Activated CD4-positive, alpha-beta memory T cell treated with anti-CD3 and anti-CD28 coated beads for 36 hours (primary cell): ENCODE measurements at regions of chr20 and their contacts with region 1.

Region 1: DNA sequence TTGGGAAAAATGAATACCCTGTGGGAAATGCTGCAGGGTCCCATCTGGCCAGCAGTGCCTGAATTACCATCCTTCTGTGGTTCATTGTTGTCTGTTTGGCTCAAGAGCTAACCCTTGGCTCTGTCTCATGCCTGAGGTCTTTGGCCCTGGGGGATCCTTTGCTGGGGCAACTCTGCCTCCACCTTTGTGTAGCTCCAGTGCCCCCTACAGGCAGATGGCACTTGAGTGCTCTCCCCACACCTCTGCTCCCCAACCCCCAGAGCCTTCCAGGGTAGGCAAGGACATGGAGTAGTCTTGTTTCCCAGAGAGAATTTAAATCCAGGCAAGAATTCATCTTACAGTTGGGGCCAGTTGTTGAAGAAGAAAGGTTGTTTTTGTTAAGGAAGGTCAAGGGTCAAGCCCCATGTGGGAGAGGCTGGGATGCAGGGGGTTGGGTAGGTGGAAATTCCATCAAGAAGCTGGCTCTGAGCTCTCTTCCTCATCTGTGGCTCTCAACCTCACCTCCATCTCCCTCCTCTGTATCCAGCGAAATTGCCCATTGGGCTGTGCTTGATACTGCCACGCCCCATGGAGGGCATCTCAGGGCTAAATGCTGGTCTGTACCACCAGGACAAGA is 44.2 kb downstream of the ZNF831 start:
- DNase-seq: peak; percentile 86
- H3K4me3 Mint-ChIP-seq: no peak overlapping the region
- H3K27ac Mint-ChIP-seq: peak overlapping the region; percentile 64
- H3K4me1 Mint-ChIP-seq: peaks cover 22% of the 10 kb centered on the region
- H3K27me3 Mint-ChIP-seq: no peaks in the 10 kb centered on the region

Region 2: GRCh38 chr20:59055295-59055694 is 152.6 kb before region 1 on chr20:
- CTCF ChIA-PET with region 1: interaction called, 10 read pairs
- POLR2A ChIA-PET with region 1: no interaction called
- intact Hi-C with region 1: no loop called
- DNase-seq: no peak
- H3K4me3 Mint-ChIP-seq: no peak overlapping the region
- H3K27ac Mint-ChIP-seq: no peak overlapping the region
- H3K4me1 Mint-ChIP-seq: no peaks in the 10 kb centered on the region
- H3K27me3 Mint-ChIP-seq: peaks cover 1% of the 10 kb centered on the region

Region 3: DNA sequence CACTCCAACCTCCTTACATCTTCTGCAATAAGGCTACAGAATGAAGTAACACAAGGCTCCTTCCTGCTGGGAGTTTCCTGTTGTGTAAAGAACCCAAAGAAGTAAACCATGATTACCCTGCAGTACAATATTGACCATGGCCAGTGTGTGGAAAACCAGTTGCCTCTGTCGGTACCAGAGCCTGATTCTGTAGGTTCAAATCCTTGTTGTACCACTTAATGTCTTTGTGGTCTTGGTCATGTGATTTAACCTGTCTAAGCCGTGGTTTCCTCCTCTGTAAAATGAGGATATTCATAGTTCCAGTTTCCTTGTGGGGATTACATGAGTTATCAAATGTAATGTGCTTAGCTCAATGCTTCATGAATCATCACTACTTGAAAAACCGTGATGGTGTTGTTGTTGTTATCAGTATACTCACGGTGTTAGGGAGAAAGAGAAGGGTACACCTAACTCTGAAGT is 105.0 kb before region 1 on chr20:
- CTCF ChIA-PET with region 1: interaction called, 13 read pairs
- POLR2A ChIA-PET with region 1: interaction called, 5 read pairs
- intact Hi-C with region 1: no loop called
- DNase-seq: no peak
- H3K4me3 Mint-ChIP-seq: no peak overlapping the region
- H3K27ac Mint-ChIP-seq: peak overlapping the region; percentile 18
- H3K4me1 Mint-ChIP-seq: peaks cover 13% of the 10 kb centered on the region
- H3K27me3 Mint-ChIP-seq: no peaks in the 10 kb centered on the region

Region 4: GRCh38 chr20:59149651-59150504 is 58.0 kb before region 1 on chr20:
- CTCF ChIA-PET with region 1: interaction called, 17 read pairs
- POLR2A ChIA-PET with region 1: interaction called, 3 read pairs
- intact Hi-C with region 1: no loop called
- DNase-seq: peak; percentile 85
- H3K4me3 Mint-ChIP-seq: peak overlapping the region; percentile 62
- H3K27ac Mint-ChIP-seq: peak overlapping the region; percentile 92
- H3K4me1 Mint-ChIP-seq: peaks cover 88% of the 10 kb centered on the region
- H3K27me3 Mint-ChIP-seq: no peaks in the 10 kb centered on the region

Region 5: DNA sequence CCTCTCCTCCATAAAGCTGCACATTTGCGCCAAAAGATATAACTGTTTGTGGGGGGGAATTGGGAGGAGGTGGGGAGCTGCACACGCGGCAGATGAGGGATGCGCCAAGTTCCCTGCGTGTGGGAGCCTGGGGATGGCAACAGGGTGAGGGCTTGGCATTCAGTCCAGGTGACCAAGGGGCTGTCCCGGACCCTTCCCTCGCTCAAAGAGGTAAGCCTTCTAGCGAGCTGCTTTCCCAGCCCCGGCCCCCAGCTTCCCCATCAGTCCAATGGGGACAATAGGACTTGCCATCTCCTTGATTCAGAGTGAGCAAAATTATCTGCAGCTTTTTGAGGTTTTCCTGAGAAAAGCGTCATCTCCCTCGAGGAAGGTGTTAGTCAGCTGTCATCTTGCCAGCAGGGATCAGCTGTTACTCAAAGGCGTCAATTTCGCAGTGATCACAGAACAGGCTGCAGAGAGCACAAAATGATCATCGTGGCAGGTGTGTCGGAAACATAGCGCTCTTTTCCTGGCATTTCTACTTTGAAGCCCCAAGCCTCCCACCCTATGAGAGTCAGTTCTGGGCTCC is 22.9 kb before region 1 on chr20:
- CTCF ChIA-PET with region 1: interaction called, 13 read pairs
- POLR2A ChIA-PET with region 1: no interaction called
- intact Hi-C with region 1: no loop called
- DNase-seq: peak; percentile 56
- H3K4me3 Mint-ChIP-seq: no peak overlapping the region
- H3K27ac Mint-ChIP-seq: no peak overlapping the region
- H3K4me1 Mint-ChIP-seq: peaks cover 44% of the 10 kb centered on the region
- H3K27me3 Mint-ChIP-seq: no peaks in the 10 kb centered on the region